Activated T-helper 1 cell treated with anti-CD3 and anti-CD28 coated beads, Interleukin-12 subunit alpha, Interleukin-12 subunit beta, Interleukin-2, Interleukin-4 antibody, amounts not matched to agents 30 ng/mL and 10 ng/mL and 1 ng/mL, durations not matched to agents 14 hours and 24 hours and 36 hours (primary cell): ENCODE measurements at regions of chr12 and their contacts with region 1.

Region 1: GRCh38 chr12:116060764-116061163 is 216.7 kb downstream of the MED13L start:
- DNase-seq: peak; percentile 2
- H3K4me3 Mint-ChIP-seq: peak overlapping the region; percentile 61
- H3K27ac Mint-ChIP-seq: peak overlapping the region; percentile 76
- H3K4me1 Mint-ChIP-seq: peaks cover 32% of the 10 kb centered on the region
- H3K27me3 Mint-ChIP-seq: no peaks in the 10 kb centered on the region

Region 2: DNA sequence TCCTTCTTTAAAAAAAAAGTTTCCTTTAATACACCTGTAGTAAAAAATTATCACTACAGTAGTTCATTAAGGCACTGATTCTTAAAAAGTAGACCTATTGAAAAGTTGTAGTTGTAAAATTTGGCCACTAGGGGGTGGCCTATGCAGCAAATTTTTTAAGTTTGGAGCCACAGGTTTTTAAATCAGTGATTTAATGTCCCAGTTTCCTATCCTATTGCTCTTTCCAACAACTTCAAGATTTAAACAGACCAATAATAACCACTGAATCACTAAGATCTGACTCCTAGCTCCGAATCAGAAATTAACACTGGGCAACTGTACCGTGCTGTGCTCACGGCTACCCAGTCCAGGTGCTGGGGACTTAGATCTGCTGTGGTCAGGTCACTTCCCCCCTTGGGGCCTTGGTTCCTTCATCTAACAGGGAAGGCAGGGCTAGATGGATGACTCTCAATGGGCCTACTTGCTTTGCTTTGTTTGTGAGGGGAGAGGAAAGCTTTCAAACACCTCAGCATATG is 62.6 kb before region 1 on chr12:
- intact Hi-C with region 1: loop called (anchors 5 kb)
- DNase-seq: no peak
- H3K4me3 Mint-ChIP-seq: no peak overlapping the region
- H3K27ac Mint-ChIP-seq: no peak overlapping the region
- H3K4me1 Mint-ChIP-seq: no peaks in the 10 kb centered on the region
- H3K27me3 Mint-ChIP-seq: no peaks in the 10 kb centered on the region

Region 3: DNA sequence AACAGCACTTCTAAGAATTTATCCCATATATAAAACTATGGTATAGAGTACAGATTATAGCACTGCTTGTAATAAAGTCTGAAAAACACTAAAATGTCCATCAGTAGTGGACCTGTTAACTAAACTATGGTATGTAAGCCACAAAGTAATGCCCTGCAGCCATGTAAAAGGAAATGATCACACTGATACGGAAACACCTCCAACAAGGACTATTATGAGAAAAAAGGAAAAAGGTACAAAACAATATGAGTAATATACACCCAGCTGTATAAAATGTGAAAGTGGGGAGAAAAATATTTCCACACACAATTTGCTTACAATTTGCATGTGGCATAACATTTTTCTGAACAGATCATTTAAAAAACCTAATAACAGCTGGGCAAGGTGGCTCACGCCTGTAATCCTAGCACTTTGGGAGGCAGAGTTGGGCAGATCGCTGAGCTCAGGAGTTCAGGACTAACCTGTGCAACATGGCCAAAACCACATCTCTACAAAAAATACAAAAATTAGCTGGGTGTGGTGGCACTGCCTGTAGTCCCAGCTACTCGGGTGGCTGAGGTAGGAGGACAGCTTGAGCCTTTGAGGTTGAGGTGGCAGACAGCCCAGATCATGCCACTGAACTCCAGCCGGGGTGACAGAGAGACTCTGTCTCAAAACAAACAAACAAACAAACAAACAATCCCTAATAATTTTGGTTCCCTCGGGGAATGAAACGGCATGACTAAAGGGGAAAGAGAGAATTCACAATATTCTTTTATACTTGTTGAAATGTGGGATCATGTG is 33.8 kb before region 1 on chr12:
- intact Hi-C with region 1: loop called (anchors 5 kb)
- DNase-seq: no peak
- H3K4me3 Mint-ChIP-seq: no peak overlapping the region
- H3K27ac Mint-ChIP-seq: no peak overlapping the region
- H3K4me1 Mint-ChIP-seq: peaks cover 14% of the 10 kb centered on the region
- H3K27me3 Mint-ChIP-seq: no peaks in the 10 kb centered on the region

Region 4: DNA sequence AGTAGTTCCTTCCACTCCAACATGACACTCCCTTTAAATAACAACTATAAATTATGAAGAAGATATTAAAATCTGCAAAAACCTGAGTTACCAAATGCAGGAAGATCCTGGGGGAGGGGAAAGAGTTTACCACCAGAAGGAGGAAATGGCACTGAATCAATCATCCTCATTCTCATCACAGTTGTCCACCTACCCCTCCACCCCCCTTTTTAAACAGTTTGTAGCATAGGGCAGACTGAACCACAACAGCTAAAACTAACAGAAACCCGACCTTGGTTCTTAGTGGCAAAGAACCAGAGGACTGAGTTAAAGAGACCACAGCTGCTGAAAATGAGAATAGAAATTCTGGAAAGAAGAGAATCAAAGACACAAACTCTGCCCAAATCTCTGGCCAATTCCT is 27.2 kb after region 1 on chr12:
- intact Hi-C with region 1: loop called (anchors 2 kb)
- DNase-seq: no peak
- H3K4me3 Mint-ChIP-seq: no peak overlapping the region
- H3K27ac Mint-ChIP-seq: peak overlapping the region; percentile 19
- H3K4me1 Mint-ChIP-seq: peaks cover 48% of the 10 kb centered on the region
- H3K27me3 Mint-ChIP-seq: no peaks in the 10 kb centered on the region

Region 5: DNA sequence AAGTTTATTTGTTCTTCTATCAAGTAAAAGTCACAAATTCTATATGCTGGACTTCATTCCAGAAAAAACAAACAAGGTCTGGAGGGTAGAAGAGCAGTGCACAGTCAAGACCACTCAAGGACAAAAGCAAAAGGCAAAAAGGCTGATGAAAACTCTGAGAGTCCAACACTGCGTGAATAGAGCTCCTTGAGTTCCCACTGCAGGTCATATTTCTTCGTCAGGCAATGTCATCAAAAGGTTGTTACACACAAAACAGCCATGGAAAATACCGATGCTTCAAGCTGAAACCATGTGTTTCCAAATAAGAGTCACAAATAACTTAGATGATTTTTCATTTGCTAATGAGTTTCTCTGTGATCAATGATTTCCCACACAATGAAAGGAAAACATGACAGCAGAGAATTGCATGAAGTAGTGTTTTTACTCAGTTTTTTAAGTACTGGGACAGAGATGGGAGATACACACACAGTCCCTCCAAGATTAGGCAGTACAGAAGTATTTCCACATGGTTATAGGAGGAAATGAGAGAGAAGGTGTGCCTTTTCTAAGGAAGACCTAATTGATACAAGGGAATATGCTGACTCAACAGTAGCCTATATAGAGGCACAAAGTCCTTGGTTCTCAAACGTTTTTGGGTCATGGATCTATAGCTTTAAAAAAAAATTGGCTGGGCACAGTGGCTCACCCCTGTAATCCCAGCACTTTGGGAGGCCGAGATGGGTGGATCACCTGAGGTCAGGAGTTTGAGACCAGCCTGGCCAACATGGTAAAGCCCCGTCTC is 39.1 kb after region 1 on chr12:
- intact Hi-C with region 1: loop called (anchors 2 kb)
- DNase-seq: no peak
- H3K4me3 Mint-ChIP-seq: no peak overlapping the region
- H3K27ac Mint-ChIP-seq: peak overlapping the region; percentile 64
- H3K4me1 Mint-ChIP-seq: peaks cover 24% of the 10 kb centered on the region
- H3K27me3 Mint-ChIP-seq: no peaks in the 10 kb centered on the region

Region 6: GRCh38 chr12:116123451-116124258 is 62.9 kb after region 1 on chr12:
- intact Hi-C with region 1: loop called (anchors 1 kb)
- DNase-seq: peak; percentile 12
- H3K4me3 Mint-ChIP-seq: peak overlapping the region; percentile 25
- H3K27ac Mint-ChIP-seq: peak overlapping the region; percentile 6
- H3K4me1 Mint-ChIP-seq: peaks cover 53% of the 10 kb centered on the region
- H3K27me3 Mint-ChIP-seq: no peaks in the 10 kb centered on the region

Region 7: GRCh38 chr12:116135209-116135930 is 74.6 kb after region 1 on chr12:
- intact Hi-C with region 1: loop called (anchors 1 kb)
- DNase-seq: no peak
- H3K4me3 Mint-ChIP-seq: peak overlapping the region; percentile 37
- H3K27ac Mint-ChIP-seq: peak overlapping the region; percentile 97
- H3K4me1 Mint-ChIP-seq: peaks cover 79% of the 10 kb centered on the region
- H3K27me3 Mint-ChIP-seq: no peaks in the 10 kb centered on the region